SK-N-SH (cell line): ENCODE measurements at regions of chr3 and their contacts with region 1.

Region 1: DNA sequence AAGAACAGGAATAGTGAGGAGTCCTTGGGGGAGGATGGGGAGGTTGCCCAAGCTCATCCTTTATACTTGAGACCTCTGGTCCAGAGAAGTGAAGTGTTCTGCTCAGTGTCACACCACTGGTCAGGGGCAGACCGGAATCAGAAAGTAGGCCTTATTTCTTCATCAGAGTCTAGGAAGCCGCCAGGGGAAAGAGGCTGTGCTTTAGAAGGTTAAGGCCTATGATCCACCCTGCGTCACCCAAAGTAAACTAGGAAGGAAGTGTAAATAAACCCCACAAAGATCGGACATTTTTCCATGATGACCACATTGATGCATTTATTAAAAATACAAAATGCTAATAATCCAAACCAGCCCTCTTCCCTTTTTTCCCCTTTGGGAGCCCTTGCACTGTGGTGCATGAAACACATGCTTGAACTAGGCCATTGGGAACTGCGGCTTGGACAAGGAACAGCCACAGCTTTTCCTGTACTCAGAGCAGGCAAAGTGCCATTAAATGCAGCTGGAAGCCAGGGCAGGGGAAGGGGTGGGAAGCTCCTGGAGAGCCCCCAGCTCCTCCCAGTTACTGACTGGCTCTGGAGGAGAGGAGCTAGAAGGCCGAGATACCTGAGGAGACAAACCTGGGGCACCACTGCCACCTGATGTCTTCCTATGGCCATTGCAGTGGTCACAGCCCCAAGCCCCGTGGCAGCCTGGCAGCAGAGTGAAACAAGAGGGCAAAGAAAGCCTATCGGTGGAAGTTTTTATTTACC is 37.0 kb downstream of the CDC25A start:
- DNase-seq: peak; percentile 84
- H3K4me3 ChIP-seq: peak overlapping the region in 1 of 2 experiments; percentile 47; a peak in 1 of 4 replicates
- H3K27ac ChIP-seq: no peak overlapping the region
- H3K4me1 ChIP-seq: peaks cover 0 to 5% of the 10 kb centered on the region in 2 experiments; a peak in 2 of 4 replicates
- H3K27me3 ChIP-seq: no peaks in the 10 kb centered on the region
- CTCF ChIP-seq: peak; percentile 89
- EP300 ChIP-seq: no peak
- RAD21 ChIP-seq: peak; percentile 99

Region 2: DNA sequence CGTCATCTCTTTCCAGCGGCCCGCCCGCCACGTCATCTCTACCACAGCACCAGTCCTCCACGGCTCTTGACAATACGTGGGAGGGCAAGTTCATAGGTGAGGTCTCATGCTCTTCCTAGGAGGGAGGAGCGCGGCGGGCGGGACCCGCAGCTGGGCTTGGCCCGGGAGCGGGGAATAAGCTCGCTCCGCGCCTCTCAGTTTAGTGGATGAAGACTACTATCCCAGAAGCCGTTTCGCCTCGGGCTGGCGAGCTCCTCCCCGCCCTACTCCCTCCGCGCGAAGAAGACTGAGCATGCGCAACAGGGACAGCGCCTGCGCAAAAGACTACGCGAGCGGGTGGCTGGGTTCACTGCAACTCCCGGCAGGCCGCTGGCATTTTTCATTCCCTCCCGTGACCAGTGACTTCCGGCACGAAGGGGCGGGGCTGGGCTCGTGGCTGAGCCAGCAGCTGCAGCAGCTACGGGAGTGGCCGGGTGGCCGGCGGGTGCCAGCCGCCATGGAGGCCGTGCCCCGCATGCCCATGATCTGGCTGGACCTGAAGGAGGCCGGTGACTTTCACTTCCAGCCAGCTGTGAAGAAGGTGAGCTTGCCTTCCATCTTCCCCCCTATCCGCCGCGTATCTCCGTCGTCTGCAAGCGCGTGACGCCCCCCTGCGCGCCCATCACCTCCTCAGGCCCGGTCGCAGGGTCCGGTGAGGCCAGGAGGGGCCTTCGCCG is 770.5 kb before region 1 on chr3 and contains the start of gene PTPN23:
- CTCF ChIA-PET with region 1: no interaction called
- POLR2A ChIA-PET with region 1: no interaction called
- DNase-seq: peak; percentile 97
- H3K4me3 ChIP-seq: peak within 1 kb of the TSS; percentile 77 to 96
- H3K27ac ChIP-seq: peak within 1 kb of the TSS; percentile 87 to 98
- H3K4me1 ChIP-seq: peaks cover 0 to 15% of the 10 kb centered on the region in 2 experiments; a peak in 1 of 4 replicates
- H3K27me3 ChIP-seq: no peaks in the 10 kb centered on the region
- CTCF ChIP-seq: no peak
- EP300 ChIP-seq: no peak
- RAD21 ChIP-seq: no peak
- polyA plus RNA-seq, gene PTPN23: 4.4 and 10.9 TPM in 2 replicates

Region 3: GRCh38 chr3:47762233-47762632 is 389.0 kb before region 1 on chr3:
- CTCF ChIA-PET with region 1: no interaction called
- POLR2A ChIA-PET with region 1: no interaction called
- DNase-seq: no peak
- H3K4me3 ChIP-seq: no peak overlapping the region
- H3K27ac ChIP-seq: no peak overlapping the region
- H3K4me1 ChIP-seq: no peaks in the 10 kb centered on the region
- H3K27me3 ChIP-seq: no peaks in the 10 kb centered on the region
- CTCF ChIP-seq: no peak
- EP300 ChIP-seq: no peak
- RAD21 ChIP-seq: no peak

Region 4: GRCh38 chr3:47849699-47850563 is 301.3 kb before region 1 on chr3:
- CTCF ChIA-PET with region 1: interaction called, 20 read pairs
- POLR2A ChIA-PET with region 1: no interaction called
- DNase-seq: peak; percentile 61
- H3K4me3 ChIP-seq: no peak overlapping the region
- H3K27ac ChIP-seq: no peak overlapping the region; a peak in 1 of 4 replicates
- H3K4me1 ChIP-seq: no peaks in the 10 kb centered on the region
- H3K27me3 ChIP-seq: no peaks in the 10 kb centered on the region
- CTCF ChIP-seq: peak; percentile 62
- EP300 ChIP-seq: no peak
- RAD21 ChIP-seq: peak; percentile 30

Region 5: GRCh38 chr3:47865192-47865591 is 286.0 kb before region 1 on chr3:
- CTCF ChIA-PET with region 1: interaction called, 16 read pairs
- POLR2A ChIA-PET with region 1: no interaction called
- DNase-seq: no peak
- H3K4me3 ChIP-seq: no peak overlapping the region
- H3K27ac ChIP-seq: no peak overlapping the region
- H3K4me1 ChIP-seq: no peaks in the 10 kb centered on the region
- H3K27me3 ChIP-seq: no peaks in the 10 kb centered on the region
- CTCF ChIP-seq: 0 out of 2 replicates have a peak, but pooled peaks have one; percentile 7
- EP300 ChIP-seq: no peak
- RAD21 ChIP-seq: no peak

Region 6: DNA sequence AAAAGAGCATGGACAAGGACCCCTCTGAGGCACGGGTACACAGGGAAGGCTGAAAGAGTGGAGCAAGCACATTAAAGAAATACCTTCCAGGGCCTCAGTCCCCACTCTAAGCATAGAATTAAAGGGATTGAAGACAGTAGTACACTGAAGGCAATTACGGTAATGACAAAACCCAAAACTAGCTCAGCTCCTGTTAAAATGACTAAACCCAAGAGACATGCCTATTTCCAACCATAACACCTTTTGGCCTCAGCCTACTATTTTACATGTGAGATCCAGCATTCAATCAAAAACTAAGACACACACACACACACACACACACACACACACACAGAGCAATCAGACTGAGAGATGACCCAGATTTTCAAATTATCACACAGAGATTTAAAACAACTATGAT is 154.8 kb before region 1 on chr3:
- CTCF ChIA-PET with region 1: interaction called, 11 read pairs
- POLR2A ChIA-PET with region 1: no interaction called
- DNase-seq: no peak
- H3K4me3 ChIP-seq: no peak overlapping the region
- H3K27ac ChIP-seq: no peak overlapping the region
- H3K4me1 ChIP-seq: no peaks in the 10 kb centered on the region
- H3K27me3 ChIP-seq: no peaks in the 10 kb centered on the region
- CTCF ChIP-seq: no peak
- EP300 ChIP-seq: no peak
- RAD21 ChIP-seq: no peak

Region 7: DNA sequence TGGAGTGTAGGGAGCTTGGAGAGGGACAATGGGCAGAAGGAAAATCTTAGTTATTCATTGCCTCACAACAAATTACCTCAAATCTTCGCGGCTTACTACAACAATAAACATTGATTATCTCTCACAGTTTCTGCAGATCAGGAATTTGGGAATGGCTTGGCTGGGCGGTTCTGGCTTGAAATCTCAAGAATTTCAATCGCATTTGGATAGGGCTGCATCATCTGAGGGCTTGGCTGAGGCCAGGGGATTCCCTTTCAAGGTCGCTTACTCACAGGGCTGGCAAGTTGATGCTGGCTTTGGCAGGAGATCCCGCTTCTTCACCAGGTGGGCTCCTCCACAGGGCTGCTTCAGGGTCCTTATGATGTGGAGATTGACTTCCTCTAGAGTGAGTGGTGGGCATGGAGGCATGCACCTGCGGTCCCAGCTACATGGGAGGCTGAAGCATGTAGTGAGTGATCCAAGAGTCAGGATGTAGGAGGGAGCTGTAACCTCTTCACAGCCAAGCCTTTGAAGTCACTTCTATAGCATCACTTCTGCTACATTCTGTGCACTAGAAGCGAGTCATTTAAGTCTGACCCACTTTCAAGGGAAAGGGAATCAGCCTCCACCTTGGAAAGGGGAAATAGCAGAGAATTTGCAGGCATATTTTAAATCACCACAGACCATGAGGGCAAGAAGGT is 26.1 kb before region 1 on chr3:
- CTCF ChIA-PET with region 1: interaction called, 20 read pairs
- POLR2A ChIA-PET with region 1: no interaction called
- DNase-seq: no peak
- H3K4me3 ChIP-seq: no peak overlapping the region
- H3K27ac ChIP-seq: no peak overlapping the region
- H3K4me1 ChIP-seq: no peaks in the 10 kb centered on the region
- H3K27me3 ChIP-seq: no peaks in the 10 kb centered on the region
- CTCF ChIP-seq: no peak
- EP300 ChIP-seq: no peak
- RAD21 ChIP-seq: no peak